Aorta (tissue), 5 donors: ENCODE measurements at regions of chr5 and their contacts with region 1.

Region 1: GRCh38 chr5:61331407-61332357 is at the start of gene ZSWIM6:
- DNase-seq: peak; percentile 100
- ATAC-seq: peak; percentile 96
- H3K4me3 ChIP-seq: peak within 1 kb of the TSS; percentile 90 to 98
- H3K27ac ChIP-seq: peak within 1 kb of the TSS; percentile 99
- H3K4me1 ChIP-seq: peaks cover 0 to 4% of the 10 kb centered on the region in 2 donors
- H3K27me3 ChIP-seq: no peaks in the 10 kb centered on the region
- total RNA-seq, gene ZSWIM6: 19.5 to 21.8 TPM

Region 2: GRCh38 chr5:60633341-60633740 is 698.3 kb before region 1 on chr5:
- intact Hi-C with region 1: no loop called
- DNase-seq: peak; percentile 76 to 78
- ATAC-seq: peak; percentile 85
- H3K4me3 ChIP-seq: no peak overlapping the region
- H3K27ac ChIP-seq: peak overlapping the region in 1 of 2 donors; percentile 95
- H3K4me1 ChIP-seq: peaks cover 0 to 6% of the 10 kb centered on the region in 2 donors
- H3K27me3 ChIP-seq: no peaks in the 10 kb centered on the region

Region 3: GRCh38 chr5:60960591-60960990 is 371.1 kb before region 1 on chr5:
- intact Hi-C with region 1: loop called (anchors 2 to 10 kb)
- DNase-seq: no peak
- ATAC-seq: no peak
- H3K4me3 ChIP-seq: no peak overlapping the region
- H3K27ac ChIP-seq: no peak overlapping the region
- H3K4me1 ChIP-seq: no peaks in the 10 kb centered on the region
- H3K27me3 ChIP-seq: no peaks in the 10 kb centered on the region

Region 4: GRCh38 chr5:61408476-61409168 is 76.9 kb after region 1 on chr5:
- intact Hi-C with region 1: loop called in 1 of 2 experiments (anchors 2 kb)
- DNase-seq: peak; percentile 100
- ATAC-seq: peak; percentile 100
- H3K4me3 ChIP-seq: no peak overlapping the region
- H3K27ac ChIP-seq: no peak overlapping the region
- H3K4me1 ChIP-seq: no peaks in the 10 kb centered on the region
- H3K27me3 ChIP-seq: no peaks in the 10 kb centered on the region

Region 5: GRCh38 chr5:61563401-61563800 is 231.7 kb after region 1 on chr5:
- intact Hi-C with region 1: no loop called
- DNase-seq: no peak
- ATAC-seq: no peak
- H3K4me3 ChIP-seq: no peak overlapping the region
- H3K27ac ChIP-seq: no peak overlapping the region
- H3K4me1 ChIP-seq: no peaks in the 10 kb centered on the region
- H3K27me3 ChIP-seq: no peaks in the 10 kb centered on the region

Region 6: GRCh38 chr5:61625681-61626621 is 294.3 kb after region 1 on chr5:
- intact Hi-C with region 1: loop called (anchors 5 to 10 kb)
- DNase-seq: peak; percentile 88 to 91
- ATAC-seq: peak; percentile 91
- H3K4me3 ChIP-seq: peak overlapping the region; percentile 52 to 53
- H3K27ac ChIP-seq: peak overlapping the region in 1 of 2 donors; percentile 14
- H3K4me1 ChIP-seq: no peaks in the 10 kb centered on the region
- H3K27me3 ChIP-seq: no peaks in the 10 kb centered on the region